ENCODE measurements at regions of chr13 and their contacts with region 1.

Region 1: GRCh38 chr13:46831588-46832194 is 34.7 kb upstream of the ESD start:
- DNase-seq: no peak
- ATAC-seq: no peak
- H3K4me3 ChIP-seq: no peak overlapping the region
- H3K27ac ChIP-seq: no peak overlapping the region
- H3K4me1 ChIP-seq: no peaks in the 10 kb centered on the region
- H3K27me3 ChIP-seq: no peaks in the 10 kb centered on the region

Region 2: GRCh38 chr13:46860722-46861121 is 29.0 kb after region 1 on chr13:
- intact Hi-C with region 1: no loop called
- DNase-seq: no peak
- ATAC-seq: no peak
- H3K4me3 ChIP-seq: no peak overlapping the region
- H3K27ac ChIP-seq: no peak overlapping the region
- H3K4me1 ChIP-seq: no peaks in the 10 kb centered on the region
- H3K27me3 ChIP-seq: no peaks in the 10 kb centered on the region

Region 3: GRCh38 chr13:46874006-46874405 is 42.3 kb after region 1 on chr13:
- intact Hi-C with region 1: loop called in 1 of 2 experiments (anchors 5 kb)
- DNase-seq: no peak
- ATAC-seq: no peak
- H3K4me3 ChIP-seq: no peak overlapping the region
- H3K27ac ChIP-seq: no peak overlapping the region
- H3K4me1 ChIP-seq: no peaks in the 10 kb centered on the region
- H3K27me3 ChIP-seq: no peaks in the 10 kb centered on the region

Region 4: GRCh38 chr13:47774671-47774994 is 942.9 kb after region 1 on chr13:
- intact Hi-C with region 1: loop called (anchors 5 kb)
- DNase-seq: no peak
- ATAC-seq: no peak
- H3K4me3 ChIP-seq: no peak overlapping the region
- H3K27ac ChIP-seq: no peak overlapping the region
- H3K4me1 ChIP-seq: no peaks in the 10 kb centered on the region
- H3K27me3 ChIP-seq: peaks cover 0 to 2% of the 10 kb centered on the region in 2 donors